Dendritic cell treated with granulocyte-macrophage colony-stimulating factor and Interleukin-4, amounts not matched to agents 40 ng/mL and 50 ng/mL, for 4 days (primary cell): ENCODE measurements at regions of chr13 and their contacts with region 1.

Region 1: GRCh38 chr13:79405829-79406596 is at the start of gene RBM26:
- H3K4me3 Mint-ChIP-seq: no peak within 1 kb of the TSS
- H3K27ac Mint-ChIP-seq: no peak within 1 kb of the TSS
- H3K4me1 Mint-ChIP-seq: peaks cover 13% of the 10 kb centered on the region
- H3K27me3 Mint-ChIP-seq: no peaks in the 10 kb centered on the region

Region 2: GRCh38 chr13:79194272-79194671 is 211.7 kb before region 1 on chr13:
- intact Hi-C with region 1: loop called (anchors 10 kb)
- H3K4me3 Mint-ChIP-seq: no peak overlapping the region
- H3K27ac Mint-ChIP-seq: no peak overlapping the region
- H3K4me1 Mint-ChIP-seq: peaks cover 38% of the 10 kb centered on the region
- H3K27me3 Mint-ChIP-seq: peaks cover 41% of the 10 kb centered on the region